ENCODE measurements at regions of chr6 and their contacts with region 1.

Region 1: GRCh38 chr6:80541181-80541580 is 434.7 kb downstream of the BCKDHB start:
- DNase-seq: peak; percentile 94
- H3K4me3 Mint-ChIP-seq: peak overlapping the region; percentile 32
- H3K27ac Mint-ChIP-seq: peak overlapping the region; percentile 68
- H3K4me1 Mint-ChIP-seq: peaks cover 86% of the 10 kb centered on the region
- H3K27me3 Mint-ChIP-seq: no peaks in the 10 kb centered on the region
- CTCF ChIP-seq: no peak

Region 2: DNA sequence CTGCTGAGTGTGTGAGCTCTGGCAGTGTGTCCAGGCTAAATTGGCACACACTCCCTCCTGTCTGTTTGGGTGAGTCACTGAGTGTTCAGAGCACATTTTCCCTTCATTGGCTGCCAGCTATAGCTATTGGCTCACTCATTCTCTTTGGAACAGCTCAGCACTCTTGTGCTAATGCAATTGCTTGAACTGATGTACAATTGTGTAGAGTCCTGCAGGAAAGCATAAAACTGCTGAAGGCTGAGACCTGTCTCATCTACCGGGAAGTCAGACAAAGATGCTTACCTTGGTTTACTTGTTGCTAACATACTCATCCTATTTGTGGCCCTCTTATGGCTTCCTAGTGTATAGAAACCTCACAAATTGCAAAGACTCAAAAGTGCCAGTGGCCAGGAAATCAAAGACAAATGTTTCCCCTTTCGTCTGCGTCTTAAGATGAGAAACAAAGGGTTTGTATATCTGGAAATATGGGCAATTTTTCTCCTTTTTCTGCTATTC is 83.7 kb before region 1 on chr6:
- CTCF ChIA-PET with region 1: interaction called, 4 read pairs
- POLR2A ChIA-PET with region 1: interaction called, 9 read pairs
- intact Hi-C with region 1: loop called (anchors 5 kb)
- DNase-seq: peak; percentile 98
- H3K4me3 Mint-ChIP-seq: no peak overlapping the region
- H3K27ac Mint-ChIP-seq: peak overlapping the region; percentile 30
- H3K4me1 Mint-ChIP-seq: peaks cover 58% of the 10 kb centered on the region
- H3K27me3 Mint-ChIP-seq: no peaks in the 10 kb centered on the region
- CTCF ChIP-seq: no peak

Region 3: DNA sequence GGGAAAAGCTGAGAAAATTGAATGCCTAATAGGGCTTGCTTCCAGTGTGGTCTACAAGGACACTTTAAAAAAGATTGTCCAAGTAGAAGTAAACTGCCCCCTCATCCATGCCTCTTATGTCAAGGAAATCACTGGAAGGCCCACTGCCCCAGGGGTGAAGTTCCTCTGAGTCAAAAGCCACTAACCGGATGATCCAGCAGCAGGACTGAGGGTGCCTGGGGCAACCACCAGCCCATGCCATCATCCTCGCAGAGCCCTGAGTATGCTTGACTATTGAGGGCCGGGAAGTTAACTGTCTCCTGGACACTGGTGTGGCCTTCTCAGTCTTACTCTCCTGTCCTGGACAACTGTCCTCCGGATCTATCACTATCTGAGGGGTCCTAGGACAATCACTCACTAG is 799.8 kb after region 1 on chr6:
- CTCF ChIA-PET with region 1: no interaction called
- POLR2A ChIA-PET with region 1: no interaction called
- intact Hi-C with region 1: no loop called
- DNase-seq: no peak
- H3K4me3 Mint-ChIP-seq: no peak overlapping the region
- H3K27ac Mint-ChIP-seq: no peak overlapping the region
- H3K4me1 Mint-ChIP-seq: no peaks in the 10 kb centered on the region
- H3K27me3 Mint-ChIP-seq: no peaks in the 10 kb centered on the region
- CTCF ChIP-seq: no peak